Activated CD8-positive, alpha-beta memory T cell treated with anti-CD3 and anti-CD28 coated beads, Interleukin-2, amount 10 ng/mL, durations not matched to agents 7 days and 5 days (primary cell): ENCODE measurements at regions of chrX and their contacts with region 1.

Region 1: GRCh38 chrX:150683536-150684146 is 9.6 kb upstream of the MTMR1 start:
- DNase-seq: no peak
- ATAC-seq: peak; percentile 27
- H3K4me3 Mint-ChIP-seq: no peak overlapping the region
- H3K27ac Mint-ChIP-seq: no peak overlapping the region
- H3K4me1 Mint-ChIP-seq: peaks cover 7% of the 10 kb centered on the region
- H3K27me3 Mint-ChIP-seq: no peaks in the 10 kb centered on the region

Region 2: DNA sequence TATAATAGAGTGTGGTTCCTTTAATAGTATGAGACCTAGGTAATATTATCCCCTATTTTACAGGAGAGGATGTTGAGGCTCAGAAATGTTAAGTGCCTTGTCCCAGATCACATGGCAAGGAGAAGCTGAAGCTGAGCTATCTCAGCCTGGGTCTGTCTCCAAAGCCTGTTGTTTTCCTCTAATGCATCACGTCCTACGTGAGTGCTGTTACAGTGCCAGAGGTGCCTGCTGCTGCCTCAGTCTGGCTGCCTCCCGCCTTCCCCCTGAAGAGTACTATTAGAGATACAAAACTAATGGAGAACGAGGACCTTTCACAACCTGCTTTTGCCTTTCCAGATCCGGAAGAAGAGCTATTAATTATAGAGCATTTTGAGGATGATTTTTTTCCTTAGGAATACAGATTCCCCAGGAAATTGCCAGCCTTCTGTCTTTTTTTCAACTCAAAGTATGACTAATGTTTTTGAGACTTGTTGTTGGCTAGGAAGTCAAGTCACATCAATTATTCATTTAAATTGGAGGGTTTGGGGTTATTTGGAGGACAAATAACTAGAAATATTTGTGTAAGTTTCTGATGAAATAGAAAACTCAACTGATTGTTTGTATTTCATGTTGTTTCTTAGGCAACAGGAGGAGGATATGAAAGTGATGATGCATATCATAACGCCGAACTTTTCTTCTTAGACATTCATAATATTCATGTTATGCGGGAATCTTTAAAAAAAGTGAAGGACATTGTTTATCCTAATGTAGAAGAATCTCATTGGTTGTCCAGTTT is 34.4 kb before region 1 on chrX:
- CTCF ChIA-PET with region 1: no interaction called
- DNase-seq: no peak
- ATAC-seq: no peak
- H3K4me3 Mint-ChIP-seq: no peak overlapping the region
- H3K27ac Mint-ChIP-seq: no peak overlapping the region
- H3K4me1 Mint-ChIP-seq: no peaks in the 10 kb centered on the region
- H3K27me3 Mint-ChIP-seq: no peaks in the 10 kb centered on the region

Region 3: GRCh38 chrX:150693775-150694574 is 10.3 kb after region 1 on chrX:
- CTCF ChIA-PET with region 1: interaction called, 11 read pairs
- DNase-seq: peak; percentile 90
- ATAC-seq: peak; percentile 72
- H3K4me3 Mint-ChIP-seq: peak overlapping the region; percentile 86
- H3K27ac Mint-ChIP-seq: peak overlapping the region; percentile 99
- H3K4me1 Mint-ChIP-seq: peaks cover 71% of the 10 kb centered on the region
- H3K27me3 Mint-ChIP-seq: no peaks in the 10 kb centered on the region

Region 4: GRCh38 chrX:150715184-150715583 is 31.5 kb after region 1 on chrX:
- CTCF ChIA-PET with region 1: interaction called, 19 read pairs
- DNase-seq: no peak
- ATAC-seq: no peak
- H3K4me3 Mint-ChIP-seq: no peak overlapping the region
- H3K27ac Mint-ChIP-seq: no peak overlapping the region
- H3K4me1 Mint-ChIP-seq: peaks cover 18% of the 10 kb centered on the region
- H3K27me3 Mint-ChIP-seq: no peaks in the 10 kb centered on the region